Vagina (tissue), 2 donors: ENCODE measurements at regions of chr12 and their contacts with region 1.

Region 1: GRCh38 chr12:120649442-120650232 is 9.2 kb downstream of the CABP1 start:
- DNase-seq: no peak
- H3K4me3 ChIP-seq: peak overlapping the region; percentile 30 to 39
- H3K27ac ChIP-seq: peak overlapping the region; percentile 75
- H3K4me1 ChIP-seq: peaks cover 18% of the 10 kb centered on the region
- H3K27me3 ChIP-seq: no peaks in the 10 kb centered on the region
- CTCF ChIP-seq: peak in 1 of 3 experiments; percentile 0
- POLR2A ChIP-seq: no peak

Region 2: GRCh38 chr12:120580787-120581723 is 68.6 kb before region 1 on chr12 and contains the start of gene POP5:
- intact Hi-C with region 1: loop called (anchors 5 kb)
- DNase-seq: peak; percentile 97
- H3K4me3 ChIP-seq: peak within 1 kb of the TSS; percentile 71 to 73
- H3K27ac ChIP-seq: peak within 1 kb of the TSS; percentile 38
- H3K4me1 ChIP-seq: peaks cover 36% of the 10 kb centered on the region
- H3K27me3 ChIP-seq: no peaks in the 10 kb centered on the region
- CTCF ChIP-seq: peak in 1 of 3 experiments; percentile 22
- POLR2A ChIP-seq: no peak
- total RNA-seq, gene POP5: 35.6 TPM

Region 3: DNA sequence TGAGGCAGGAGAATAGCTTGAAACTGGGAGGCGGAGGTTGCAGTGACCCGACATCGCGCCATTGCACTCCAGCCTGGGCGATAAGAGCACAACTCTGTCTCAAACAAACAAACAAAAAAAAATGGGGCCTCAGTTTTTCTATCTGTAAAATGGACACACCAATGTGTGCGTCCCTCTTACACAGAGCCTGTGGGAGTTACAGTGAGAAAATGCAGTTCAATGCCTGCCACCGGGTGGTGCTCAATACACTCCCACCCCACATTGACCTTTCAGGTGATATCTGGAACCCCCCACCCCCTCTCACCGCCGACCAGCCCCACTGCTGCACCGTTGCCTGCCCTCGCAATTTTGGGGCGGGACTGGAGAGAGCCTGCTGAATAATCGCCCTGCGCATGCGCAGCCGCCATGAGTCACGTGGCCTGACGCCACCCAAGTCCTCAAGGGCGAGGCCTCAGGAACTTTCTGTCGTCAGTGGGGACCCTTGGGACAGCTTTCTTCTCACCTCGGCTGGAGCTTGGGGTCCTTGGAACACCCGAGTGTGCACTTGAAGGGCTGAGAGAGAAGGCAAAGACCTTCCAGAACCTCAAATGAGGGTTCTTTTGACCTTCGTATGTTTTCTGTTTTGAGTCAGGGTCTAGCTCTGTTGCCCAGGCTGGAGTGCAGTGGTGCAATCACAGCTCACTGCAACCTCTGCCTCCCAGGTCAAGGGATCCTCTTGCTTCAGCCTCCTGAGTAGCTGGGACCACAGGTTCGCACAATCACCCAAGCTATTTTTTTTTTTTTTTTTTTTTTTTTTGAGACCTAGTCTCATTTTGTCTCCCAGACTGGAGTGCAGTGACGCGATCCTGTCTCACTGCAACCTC is 23.8 kb before region 1 on chr12:
- intact Hi-C with region 1: no loop called
- DNase-seq: no peak
- H3K4me3 ChIP-seq: no peak overlapping the region
- H3K27ac ChIP-seq: no peak overlapping the region
- H3K4me1 ChIP-seq: no peaks in the 10 kb centered on the region
- H3K27me3 ChIP-seq: no peaks in the 10 kb centered on the region
- CTCF ChIP-seq: no peak
- POLR2A ChIP-seq: no peak

Region 4: DNA sequence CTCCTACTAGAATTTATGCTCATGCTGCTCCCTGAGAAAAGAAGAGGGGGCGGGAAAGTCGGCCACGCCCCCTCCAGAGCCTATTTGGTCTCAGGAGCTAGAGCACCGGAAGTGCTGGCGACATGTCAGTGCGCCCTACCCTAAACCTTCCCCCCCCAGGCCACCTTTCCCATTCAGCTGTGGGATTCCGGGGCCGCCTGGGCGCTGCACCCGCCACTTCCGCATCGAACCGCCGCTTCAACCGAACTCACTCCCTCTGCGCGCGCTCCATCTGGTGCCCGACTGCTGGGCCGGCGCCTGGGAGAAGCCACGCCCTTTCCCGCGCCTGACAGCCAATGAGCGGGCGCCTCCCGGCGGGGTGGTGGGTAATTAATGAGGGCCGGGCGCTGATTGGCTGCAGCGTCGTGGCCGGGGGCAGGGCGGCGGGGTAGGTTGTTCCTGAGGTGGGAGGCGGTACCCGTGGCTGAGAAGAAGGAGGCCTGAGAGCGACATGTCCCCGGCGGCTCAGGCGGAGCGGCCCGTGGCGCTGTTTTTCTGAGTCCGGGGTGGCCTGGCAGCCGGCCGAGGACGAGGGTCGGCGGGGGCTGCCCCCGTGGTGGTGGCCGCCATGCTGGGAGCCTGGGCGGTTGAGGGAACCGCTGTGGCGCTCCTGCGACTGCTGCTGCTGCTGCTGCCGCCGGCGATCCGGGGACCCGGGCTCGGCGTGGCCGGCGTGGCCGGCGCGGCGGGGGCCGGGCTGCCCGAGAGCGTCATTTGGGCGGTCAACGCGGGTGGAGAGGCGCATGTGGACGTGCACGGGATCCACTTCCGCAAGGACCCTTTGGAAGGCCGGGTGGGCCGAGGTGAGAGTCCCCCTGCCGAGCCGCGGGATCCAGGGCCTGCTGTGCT is 37.3 kb after region 1 on chr12 and contains the start of gene MLEC:
- intact Hi-C with region 1: loop called (anchors 2 kb)
- DNase-seq: peak; percentile 98 to 99
- H3K4me3 ChIP-seq: peak within 1 kb of the TSS; percentile 72 to 77
- H3K27ac ChIP-seq: peak within 1 kb of the TSS; percentile 92
- H3K4me1 ChIP-seq: peaks cover 47% of the 10 kb centered on the region
- H3K27me3 ChIP-seq: no peaks in the 10 kb centered on the region
- CTCF ChIP-seq: no peak
- POLR2A ChIP-seq: peak in 1 of 2 donors; percentile 59
- total RNA-seq, gene MLEC: 33.1 TPM

Region 5: DNA sequence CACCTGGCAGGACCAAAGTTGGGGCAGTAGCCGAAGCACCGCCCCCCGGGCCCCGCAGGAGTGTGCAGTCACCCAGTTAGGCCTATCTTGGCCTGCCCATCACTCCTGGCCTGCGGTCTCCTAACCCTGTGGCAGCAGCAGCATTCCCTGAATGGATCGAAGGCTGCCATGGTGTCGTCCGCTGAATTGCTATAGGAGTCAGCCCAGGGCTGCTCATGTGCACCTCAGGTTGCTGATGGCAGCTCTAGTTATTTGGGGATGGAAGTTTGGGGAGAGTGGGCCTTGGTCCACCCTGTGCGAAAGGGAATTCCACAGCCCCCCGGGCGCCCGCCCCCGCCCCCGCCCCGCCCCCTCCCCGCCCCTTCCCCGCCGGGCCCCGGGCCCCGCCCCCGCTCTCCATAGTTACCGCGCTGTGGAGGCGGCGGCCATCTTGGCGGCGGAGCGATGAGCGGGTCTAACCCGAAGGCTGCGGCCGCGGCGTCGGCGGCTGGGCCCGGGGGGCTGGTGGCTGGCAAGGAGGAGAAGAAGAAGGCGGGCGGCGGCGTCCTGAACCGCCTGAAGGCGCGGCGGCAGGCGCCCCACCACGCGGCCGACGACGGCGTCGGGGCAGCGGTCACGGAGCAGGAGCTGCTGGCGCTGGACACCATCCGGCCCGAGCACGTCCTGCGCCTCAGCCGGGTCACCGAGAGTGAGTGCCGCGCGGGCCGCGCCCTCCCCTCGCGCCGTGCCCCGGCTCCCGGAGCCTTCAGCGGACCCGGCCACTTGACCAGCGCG is 60.6 kb after region 1 on chr12 and contains the start of gene UNC119B:
- intact Hi-C with region 1: loop called (anchors 2 kb)
- DNase-seq: no peak
- H3K4me3 ChIP-seq: peak within 1 kb of the TSS; percentile 78 to 83
- H3K27ac ChIP-seq: peak within 1 kb of the TSS; percentile 94
- H3K4me1 ChIP-seq: peaks cover 32% of the 10 kb centered on the region
- H3K27me3 ChIP-seq: no peaks in the 10 kb centered on the region
- CTCF ChIP-seq: no peak
- POLR2A ChIP-seq: no peak
- total RNA-seq, gene UNC119B: 16.0 TPM